Psoas muscle (tissue), 8 donors: ENCODE measurements at regions of chr9 and their contacts with region 1.

Region 1: GRCh38 chr9:96854073-96854876 is at the start of gene ZNF782:
- DNase-seq: peak; percentile 93 to 95
- ATAC-seq: peak; percentile 98
- H3K4me3 ChIP-seq: peak within 1 kb of the TSS; percentile 81
- H3K27ac ChIP-seq: peak within 1 kb of the TSS; percentile 86
- H3K4me1 ChIP-seq: peaks cover 12% of the 10 kb centered on the region
- H3K27me3 ChIP-seq: no peaks in the 10 kb centered on the region
- CTCF ChIP-seq: no peak
- total RNA-seq, gene ZNF782: 2.8 to 7.0 (median 3.5) TPM

Region 2: DNA sequence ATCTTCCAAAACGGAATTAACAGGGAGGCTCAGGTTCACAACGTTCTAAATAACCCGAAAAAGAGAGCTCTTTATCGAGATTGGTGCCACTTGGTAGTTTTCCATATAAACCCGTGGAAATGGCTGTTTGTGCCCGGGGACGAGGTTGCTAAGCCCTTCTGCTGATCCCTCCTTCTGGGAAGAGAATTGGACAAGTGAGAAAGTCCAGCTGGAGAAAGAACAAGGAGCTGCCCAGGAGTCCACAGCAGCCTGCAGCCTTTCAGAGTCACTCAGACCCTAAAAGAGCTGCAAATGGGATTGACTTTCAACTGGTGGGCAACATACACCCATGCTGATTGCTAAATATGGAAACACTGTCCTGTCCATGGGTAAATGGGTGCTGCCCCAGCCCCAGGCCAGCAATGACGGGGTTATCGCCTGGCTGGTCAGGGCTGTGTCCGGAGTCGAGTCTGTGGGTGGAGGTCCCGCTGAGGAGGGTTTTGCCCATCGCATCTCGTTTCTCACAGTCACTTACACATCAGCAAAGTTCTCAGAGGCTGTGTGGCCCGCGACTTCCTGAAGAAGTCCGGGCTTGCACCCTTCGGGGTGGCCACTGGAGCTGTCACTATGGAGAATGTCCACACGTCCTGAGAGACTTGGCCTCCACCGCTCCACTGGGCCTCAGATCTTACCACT is 511.6 kb before region 1 on chr9:
- intact Hi-C with region 1: no loop called
- DNase-seq: no peak
- ATAC-seq: no peak
- H3K4me3 ChIP-seq: no peak overlapping the region
- H3K27ac ChIP-seq: no peak overlapping the region
- H3K4me1 ChIP-seq: peaks cover 3% of the 10 kb centered on the region
- H3K27me3 ChIP-seq: no peaks in the 10 kb centered on the region
- CTCF ChIP-seq: no peak

Region 3: GRCh38 chr9:96777426-96777864 is 76.8 kb before region 1 on chr9:
- intact Hi-C with region 1: loop called in 1 of 2 experiments (anchors 5 kb)
- DNase-seq: no peak
- ATAC-seq: no peak
- H3K4me3 ChIP-seq: peak overlapping the region; percentile 85
- H3K27ac ChIP-seq: peak overlapping the region; percentile 67
- H3K4me1 ChIP-seq: peaks cover 18% of the 10 kb centered on the region
- H3K27me3 ChIP-seq: no peaks in the 10 kb centered on the region
- CTCF ChIP-seq: no peak

Region 4: DNA sequence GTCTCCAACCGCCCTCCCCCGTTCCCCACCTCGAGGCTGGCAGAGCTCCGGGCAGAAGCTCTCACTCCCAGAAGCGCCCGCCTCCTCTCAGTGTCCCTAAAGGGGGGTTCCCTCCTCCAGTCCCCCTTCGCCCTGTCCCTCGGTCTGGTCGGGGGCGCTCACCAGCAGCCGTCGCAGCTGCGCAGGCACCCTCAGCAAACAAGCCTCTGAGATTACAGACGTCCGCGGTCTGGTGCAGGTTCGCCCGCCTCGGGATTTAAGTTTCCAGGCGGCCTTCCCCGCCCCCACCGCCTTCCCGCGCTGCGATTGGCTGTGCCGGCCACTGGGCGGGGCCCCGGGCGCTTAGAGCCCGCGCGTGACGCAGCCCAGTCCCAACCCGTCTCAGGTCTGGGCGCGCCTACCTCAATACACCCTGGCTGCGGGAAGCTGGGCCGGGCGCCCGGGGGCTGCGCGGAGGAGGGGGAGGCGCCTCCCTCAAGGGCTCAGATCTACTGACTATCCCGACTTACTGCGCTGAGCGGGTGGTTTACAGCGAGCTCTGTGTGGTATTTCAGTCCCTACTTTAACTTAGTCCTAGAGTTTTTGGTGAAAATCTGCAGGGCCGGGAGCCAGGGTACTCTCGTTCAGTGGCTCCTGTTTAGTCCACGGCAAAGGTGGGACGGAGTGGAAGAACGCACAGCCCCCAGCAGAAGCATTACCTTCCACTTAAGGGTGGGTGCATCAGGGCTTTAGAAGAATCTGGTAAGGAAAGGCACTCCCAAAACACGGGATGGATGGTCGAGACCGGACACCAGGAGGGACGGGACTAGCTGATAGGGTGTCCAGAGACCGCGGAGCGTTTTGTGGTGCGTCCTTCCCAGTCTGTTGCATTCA is 184.9 kb after region 1 on chr9 and contains the start of gene CTSV:
- intact Hi-C with region 1: loop called in 1 of 2 experiments (anchors 5 kb)
- DNase-seq: peak; percentile 80 to 88
- ATAC-seq: peak; percentile 99 to 100 (median 100)
- H3K4me3 ChIP-seq: peak within 1 kb of the TSS; percentile 73
- H3K27ac ChIP-seq: no peak within 1 kb of the TSS
- H3K4me1 ChIP-seq: no peaks in the 10 kb centered on the region
- H3K27me3 ChIP-seq: peaks cover 0 to 2% (median 0%) of the 10 kb centered on the region in 3 donors
- CTCF ChIP-seq: no peak
- total RNA-seq, gene CTSV: 0.17 to 0.40 (median 0.28) TPM in 3 of 4 donors, not detected in the other

Region 5: DNA sequence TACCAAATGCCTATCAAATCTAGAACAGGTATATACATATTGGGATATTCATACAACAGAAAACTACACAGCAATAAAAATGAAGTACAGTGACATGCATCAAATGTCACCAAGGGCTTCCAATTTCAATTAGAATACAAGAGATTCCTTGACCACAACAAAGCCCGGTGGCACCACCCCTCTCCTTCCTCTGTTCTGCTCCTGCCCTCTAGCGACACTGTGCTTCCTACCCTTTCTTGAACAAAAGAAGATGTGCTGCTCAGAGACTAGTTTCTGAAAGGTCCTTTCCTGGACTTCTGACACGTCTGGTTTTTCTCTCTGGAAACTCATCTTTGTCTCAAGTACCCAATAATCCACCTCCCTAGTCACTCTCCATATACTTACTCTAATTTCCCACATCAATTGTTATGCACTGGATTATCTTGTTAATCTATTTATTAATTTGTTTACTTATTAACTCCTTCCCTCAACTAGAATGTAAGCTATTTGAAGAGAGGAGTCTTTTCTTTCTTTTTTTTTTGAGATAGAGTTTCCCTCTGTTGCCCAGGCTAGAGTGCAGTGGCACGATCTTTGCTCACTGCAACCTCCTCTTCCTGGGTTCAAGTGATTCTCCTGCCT is 255.0 kb after region 1 on chr9:
- intact Hi-C with region 1: loop called (anchors 2 to 5 kb)
- DNase-seq: no peak
- ATAC-seq: peak in 3 of 4 donors; percentile 59 to 89 (median 80)
- H3K4me3 ChIP-seq: no peak overlapping the region
- H3K27ac ChIP-seq: no peak overlapping the region
- H3K4me1 ChIP-seq: no peaks in the 10 kb centered on the region
- H3K27me3 ChIP-seq: no peaks in the 10 kb centered on the region
- CTCF ChIP-seq: peak; percentile 56

Region 6: GRCh38 chr9:97398999-97399758 is 544.9 kb after region 1 on chr9:
- intact Hi-C with region 1: loop called (anchors 5 to 10 kb)
- DNase-seq: peak; percentile 66 to 71
- ATAC-seq: peak; percentile 74 to 86 (median 82)
- H3K4me3 ChIP-seq: no peak overlapping the region
- H3K27ac ChIP-seq: no peak overlapping the region
- H3K4me1 ChIP-seq: no peaks in the 10 kb centered on the region
- H3K27me3 ChIP-seq: no peaks in the 10 kb centered on the region
- CTCF ChIP-seq: peak; percentile 84

Region 7: DNA sequence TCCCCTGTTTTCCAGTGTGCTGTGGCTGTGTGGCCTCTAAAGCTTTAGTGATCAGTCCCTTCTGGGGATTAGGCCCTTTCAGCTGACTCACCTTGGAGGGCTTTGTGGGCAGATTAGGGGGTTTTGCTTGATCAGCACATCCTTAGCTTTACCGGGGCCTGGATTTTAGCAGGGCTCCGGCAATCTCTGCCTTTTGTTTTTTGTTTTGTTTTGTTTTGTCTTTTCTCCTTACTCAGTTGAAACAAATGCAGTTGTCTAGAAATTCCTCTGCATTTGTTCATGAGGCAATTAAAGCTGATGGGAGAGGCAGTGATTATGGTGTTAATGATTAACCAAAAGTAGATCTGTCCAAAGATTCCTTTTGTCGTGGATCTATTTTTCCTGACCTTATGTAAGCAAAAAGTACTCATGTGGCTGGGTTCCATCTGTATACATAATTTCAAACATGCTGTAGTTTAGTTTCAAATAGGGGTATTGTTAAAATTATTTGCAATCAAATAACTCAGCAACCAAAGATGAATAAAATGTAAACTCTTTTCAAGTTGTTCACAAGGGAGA is 552.4 kb after region 1 on chr9:
- intact Hi-C with region 1: loop called in 1 of 2 experiments (anchors 10 kb)
- DNase-seq: no peak
- ATAC-seq: no peak
- H3K4me3 ChIP-seq: no peak overlapping the region
- H3K27ac ChIP-seq: no peak overlapping the region
- H3K4me1 ChIP-seq: no peaks in the 10 kb centered on the region
- H3K27me3 ChIP-seq: peaks cover 0 to 3% (median 2%) of the 10 kb centered on the region in 3 donors
- CTCF ChIP-seq: no peak

Region 8: DNA sequence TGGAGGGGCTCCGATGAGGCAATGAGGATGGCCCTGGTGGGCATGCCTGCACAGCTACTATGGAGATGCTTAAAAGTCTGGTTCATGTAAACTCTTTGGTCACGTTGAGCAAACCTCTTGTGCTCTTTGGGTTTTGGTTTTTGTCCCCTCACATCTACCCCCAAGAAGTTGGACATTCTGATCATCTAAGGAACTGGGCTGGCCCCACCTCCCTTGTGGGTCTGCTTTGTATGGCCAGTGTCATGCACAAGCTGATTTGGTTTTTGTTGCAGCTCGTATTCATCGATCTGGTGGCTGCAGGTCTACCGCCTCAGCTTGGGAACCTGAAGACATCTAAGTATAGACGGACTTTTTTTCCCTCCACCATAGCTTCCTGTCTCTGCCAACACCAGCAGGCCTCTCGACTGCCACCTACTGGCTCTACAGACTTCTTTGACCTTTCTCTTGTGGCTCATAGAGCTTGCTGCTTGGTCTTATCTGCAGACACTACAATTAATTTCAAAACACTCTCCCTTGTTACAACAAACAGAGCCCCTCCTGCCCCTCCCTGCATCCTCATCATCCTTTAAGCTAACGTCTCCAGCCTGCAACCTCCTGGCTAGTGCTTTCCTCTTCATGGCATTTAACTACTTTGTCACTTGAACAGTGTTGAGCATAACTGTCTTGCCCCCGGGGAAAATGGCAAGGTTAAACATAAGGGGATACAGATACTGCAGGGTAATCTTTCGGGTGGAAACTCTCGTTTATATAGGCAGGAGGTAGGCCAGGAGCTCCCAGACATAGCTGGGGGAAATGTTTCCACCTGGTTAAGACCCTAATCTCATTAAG is 744.4 kb after region 1 on chr9:
- intact Hi-C with region 1: loop called in 1 of 2 experiments (anchors 10 kb)
- DNase-seq: peak; percentile 66 to 81
- ATAC-seq: peak; percentile 51 to 58 (median 56)
- H3K4me3 ChIP-seq: no peak overlapping the region
- H3K27ac ChIP-seq: peak overlapping the region; percentile 77
- H3K4me1 ChIP-seq: peaks cover 75% of the 10 kb centered on the region
- H3K27me3 ChIP-seq: no peaks in the 10 kb centered on the region
- CTCF ChIP-seq: peak; percentile 83